SK-N-SH (cell line): ENCODE measurements at regions of chr4 and their contacts with region 1.

Region 1: DNA sequence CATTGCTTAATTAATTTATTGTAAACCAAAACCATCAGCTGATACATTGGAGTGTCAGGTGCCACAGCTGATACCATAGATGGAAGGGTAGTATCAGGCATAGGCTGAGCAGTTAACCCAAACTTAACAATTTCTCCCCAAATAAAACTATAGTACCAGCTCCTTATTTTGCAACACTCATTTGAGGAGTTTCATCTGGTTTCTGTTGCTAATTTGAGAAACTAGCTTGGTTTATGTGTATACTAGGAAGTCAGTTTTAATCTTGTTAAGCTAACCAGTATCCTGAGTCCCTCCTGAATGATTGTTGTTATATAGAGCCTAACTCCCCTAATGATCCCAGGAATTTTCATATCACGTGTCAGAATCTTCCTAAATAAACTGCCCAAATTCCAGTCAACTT is 12.7 kb downstream of the DCAF16 start:
- DNase-seq: no peak
- H3K4me3 ChIP-seq: no peak overlapping the region
- H3K27ac ChIP-seq: no peak overlapping the region
- H3K4me1 ChIP-seq: no peaks in the 10 kb centered on the region
- H3K27me3 ChIP-seq: no peaks in the 10 kb centered on the region
- CTCF ChIP-seq: no peak
- EP300 ChIP-seq: no peak
- RAD21 ChIP-seq: no peak

Region 2: GRCh38 chr4:17781300-17782287 is 16.2 kb before region 1 on chr4 and contains the start of gene FAM184B:
- CTCF ChIA-PET with region 1: no interaction called
- POLR2A ChIA-PET with region 1: no interaction called
- DNase-seq: peak; percentile 63
- H3K4me3 ChIP-seq: peak within 1 kb of the TSS in 1 of 2 experiments; percentile 26; a peak in 2 of 4 replicates
- H3K27ac ChIP-seq: no peak within 1 kb of the TSS
- H3K4me1 ChIP-seq: no peaks in the 10 kb centered on the region; a peak in 2 of 4 replicates
- H3K27me3 ChIP-seq: no peaks in the 10 kb centered on the region
- CTCF ChIP-seq: no peak
- EP300 ChIP-seq: no peak
- RAD21 ChIP-seq: no peak
- polyA plus RNA-seq, gene FAM184B: not detected in 2 replicates

Region 3: GRCh38 chr4:17810260-17811077 is 12.7 kb after region 1 on chr4 and contains the starts of genes DCAF16 and NCAPG:
- CTCF ChIA-PET with region 1: interaction called, 14 read pairs
- POLR2A ChIA-PET with region 1: interaction called, 3 read pairs
- DNase-seq: peak; percentile 96
- H3K4me3 ChIP-seq: peak within 1 kb of the TSS; percentile 89 to 98
- H3K27ac ChIP-seq: peak within 1 kb of the TSS; percentile 93
- H3K4me1 ChIP-seq: peaks cover 4 to 22% of the 10 kb centered on the region in 2 experiments; a peak in 3 of 4 replicates
- H3K27me3 ChIP-seq: no peaks in the 10 kb centered on the region
- CTCF ChIP-seq: no peak
- EP300 ChIP-seq: no peak; a peak in 1 of 4 replicates
- RAD21 ChIP-seq: no peak
- polyA plus RNA-seq, gene DCAF16: 23.5 and 28.5 TPM in 2 replicates
- polyA plus RNA-seq, gene NCAPG: 4.8 and 5.4 TPM in 2 replicates